Left ventricle myocardium superior (tissue), 1 donor: ENCODE measurements at regions of chr1 and their contacts with region 1.

Region 1: DNA sequence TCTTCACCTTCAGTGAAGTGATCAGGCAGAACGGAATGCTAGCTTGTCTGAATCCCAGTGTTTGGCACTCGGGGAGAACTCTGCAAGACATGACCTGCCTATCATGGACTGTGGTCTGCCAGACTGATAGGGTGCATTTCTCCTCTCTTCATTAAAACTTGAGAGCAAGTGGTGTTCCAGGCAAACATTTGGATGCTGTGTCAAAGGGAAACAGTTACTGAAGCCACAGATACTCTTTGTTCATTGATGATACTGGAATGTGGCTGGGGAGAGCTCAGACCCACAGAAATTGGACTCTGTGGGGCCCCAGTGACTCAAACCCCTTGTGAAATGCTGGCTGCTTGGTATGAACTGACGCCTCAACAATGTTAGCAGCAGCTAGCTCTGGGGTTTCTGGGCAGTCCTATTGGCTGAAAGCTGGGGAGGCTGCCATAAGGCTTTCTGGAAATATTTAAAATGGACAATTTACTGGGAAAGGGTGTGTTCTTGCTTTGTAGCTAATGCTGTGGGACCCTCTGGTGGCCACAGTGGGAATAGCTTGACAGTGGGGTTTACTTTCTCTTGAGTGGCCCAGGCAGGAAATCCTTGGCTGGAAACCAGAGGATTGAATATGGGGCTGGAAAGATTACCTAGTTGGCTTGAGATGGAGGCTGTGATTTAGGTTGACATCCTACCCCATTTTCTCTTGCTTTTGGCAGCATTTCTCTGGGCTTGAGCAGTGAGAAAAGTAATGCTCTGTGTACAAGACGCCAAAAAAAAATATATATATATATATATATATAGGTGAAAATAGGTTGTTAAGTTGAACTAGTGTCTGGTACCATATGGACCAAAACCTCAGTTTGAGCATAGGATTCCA is 8.0 kb upstream of the S100A10 start:
- DNase-seq: peak; percentile 89
- ATAC-seq: peak; percentile 47

Region 2: DNA sequence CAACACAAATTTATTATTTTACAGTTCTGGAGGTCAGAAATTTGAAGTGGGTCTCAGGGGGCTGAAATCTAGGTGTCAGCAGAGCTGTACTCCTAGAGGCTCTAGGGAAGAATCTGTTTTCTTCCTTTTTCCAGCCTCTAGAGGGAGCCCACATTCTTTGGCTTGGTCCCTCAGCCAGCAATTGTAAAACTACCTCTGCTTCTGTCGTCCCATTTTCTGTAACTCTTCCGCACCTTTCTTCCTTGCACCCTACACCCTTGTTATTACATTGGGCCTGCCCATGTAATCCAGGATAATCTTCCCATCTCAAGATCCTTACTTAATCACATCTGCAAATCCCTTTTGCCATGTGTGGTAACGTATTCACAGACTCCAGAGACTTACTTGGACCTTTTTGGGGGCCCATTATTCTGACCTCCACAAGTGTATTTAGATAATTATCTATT is 67.5 kb before region 1 on chr1:
- intact Hi-C with region 1: loop called (anchors 2 kb)
- DNase-seq: no peak
- ATAC-seq: peak; percentile 91

Region 3: GRCh38 chr1:152313319-152313801 is 311.7 kb after region 1 on chr1:
- intact Hi-C with region 1: no loop called
- DNase-seq: peak; percentile 17
- ATAC-seq: no peak